Heart right ventricle (tissue), 16 donors: ENCODE measurements at regions of chr17 and their contacts with region 1.

Region 1: DNA sequence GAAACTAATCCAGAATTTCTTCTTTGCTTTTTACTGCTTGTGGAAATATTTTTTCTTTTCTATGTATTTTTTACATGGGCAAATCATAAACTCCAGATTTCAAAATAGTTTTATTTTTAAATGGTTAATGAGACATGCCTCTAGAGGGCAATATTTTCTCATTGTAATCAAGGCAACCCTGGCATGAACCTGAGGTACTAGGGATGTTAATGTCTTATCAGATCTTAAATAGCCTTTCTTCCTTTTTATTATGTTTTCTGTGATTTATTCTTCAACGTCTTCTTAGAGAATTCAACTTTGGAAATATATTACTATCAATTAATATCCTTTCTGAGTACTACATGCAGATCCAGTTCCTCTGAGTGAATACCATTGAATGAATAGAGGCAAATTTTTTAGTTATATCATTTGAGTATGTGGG is 324.7 kb downstream of the BCAS3 start:
- DNase-seq: no peak
- ATAC-seq: peak in 2 of 8 donors; percentile 52 to 59
- H3K4me3 ChIP-seq: no peak overlapping the region
- H3K27ac ChIP-seq: peak overlapping the region in 1 of 10 donors; percentile 18
- H3K4me1 ChIP-seq: peaks cover 0 to 11% (median under 1%) of the 10 kb centered on the region in 9 donors
- H3K27me3 ChIP-seq: no peaks in the 10 kb centered on the region
- CTCF ChIP-seq: peak; percentile 28 to 73 (median 61)

Region 2: DNA sequence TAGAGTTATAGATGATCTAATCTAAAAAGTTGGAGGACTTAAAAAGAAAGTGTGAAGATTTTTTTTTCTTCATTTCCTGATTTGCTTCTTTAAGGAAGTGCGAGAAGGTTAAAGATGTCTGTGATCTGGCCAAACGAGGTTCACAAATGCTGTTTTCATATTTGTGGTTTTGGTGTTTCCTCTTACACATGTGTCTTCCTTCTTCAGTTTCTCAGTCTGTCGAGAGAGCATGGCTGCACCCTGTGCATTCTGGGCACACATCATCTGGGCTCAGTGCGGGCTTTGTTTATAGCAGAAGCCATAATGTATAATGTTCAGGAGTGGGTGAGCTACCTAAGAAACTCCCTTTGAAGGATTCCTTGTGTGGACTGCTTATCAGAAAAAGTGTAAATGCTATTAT is 136.9 kb after region 1 on chr17:
- intact Hi-C with region 1: loop called in 1 of 10 experiments (anchors 10 kb)
- DNase-seq: no peak
- ATAC-seq: peak in 5 of 8 donors; percentile 34 to 66 (median 44)
- H3K4me3 ChIP-seq: no peak overlapping the region
- H3K27ac ChIP-seq: peak overlapping the region in 1 of 10 donors; percentile 49
- H3K4me1 ChIP-seq: peaks cover 0 to 27% (median 7%) of the 10 kb centered on the region in 9 donors
- H3K27me3 ChIP-seq: no peaks in the 10 kb centered on the region
- CTCF ChIP-seq: no peak

Region 3: DNA sequence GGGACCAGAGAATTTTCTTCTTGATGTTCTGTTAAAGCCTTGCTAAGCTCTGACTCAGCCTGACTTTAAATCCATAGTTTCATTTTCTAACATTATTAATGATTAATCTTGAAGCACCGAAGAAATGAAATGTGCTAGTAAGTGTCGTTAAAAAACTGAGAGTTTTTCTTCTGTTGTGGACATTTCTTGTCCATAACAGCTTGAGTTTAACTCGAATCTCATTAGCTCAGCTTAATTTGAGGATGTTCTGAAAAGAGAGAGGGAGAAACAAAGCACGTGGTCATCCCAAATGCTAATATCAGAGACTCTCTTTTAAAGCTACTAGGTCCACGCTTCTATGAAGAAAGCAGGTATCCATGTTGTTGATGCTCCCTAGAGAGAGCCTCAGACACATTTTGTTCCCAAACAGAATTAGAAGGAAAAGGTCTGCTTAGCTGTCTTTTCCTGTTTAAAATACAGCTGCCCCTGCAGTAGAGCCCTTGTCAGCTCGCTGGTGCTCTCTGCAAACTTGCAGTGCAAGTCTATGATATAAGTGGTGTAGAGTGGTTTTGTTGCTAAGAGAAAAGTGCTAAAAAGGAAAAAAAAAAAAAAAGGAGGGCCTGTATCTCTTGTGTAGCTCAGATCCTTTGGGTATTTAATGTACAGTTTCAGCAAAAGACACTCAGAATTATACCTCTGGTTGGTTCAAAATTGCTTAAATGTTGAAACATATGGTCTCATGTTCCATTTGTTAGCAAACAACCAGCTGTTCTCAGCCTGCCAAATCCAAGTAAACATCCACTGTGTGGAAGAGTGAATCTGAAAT is 206.2 kb after region 1 on chr17:
- intact Hi-C with region 1: loop called in 2 of 10 experiments (anchors 5 to 10 kb)
- DNase-seq: no peak
- ATAC-seq: peak in 7 of 8 donors; percentile 45 to 81 (median 59)
- H3K4me3 ChIP-seq: peak overlapping the region in 5 of 10 donors; percentile 5 to 19 (median 10)
- H3K27ac ChIP-seq: peak overlapping the region; percentile 37 to 79 (median 62)
- H3K4me1 ChIP-seq: peaks cover 0 to 31% (median 17%) of the 10 kb centered on the region in 9 donors
- H3K27me3 ChIP-seq: no peaks in the 10 kb centered on the region
- CTCF ChIP-seq: no peak

Region 4: GRCh38 chr17:61389670-61390478 is 387.5 kb after region 1 on chr17:
- intact Hi-C with region 1: loop called (anchors 2 to 5 kb)
- DNase-seq: peak in 1 of 2 donors; percentile 68
- ATAC-seq: peak; percentile 57 to 81 (median 73)
- H3K4me3 ChIP-seq: peak overlapping the region in 2 of 10 donors; percentile 1 to 20
- H3K27ac ChIP-seq: peak overlapping the region in 9 of 10 donors; percentile 19 to 72 (median 60)
- H3K4me1 ChIP-seq: peaks cover 0 to 24% (median 8%) of the 10 kb centered on the region in 9 donors
- H3K27me3 ChIP-seq: peaks cover 0 to 12% (median 0%) of the 10 kb centered on the region in 7 donors
- CTCF ChIP-seq: peak; percentile 66 to 92 (median 90)

Region 5: DNA sequence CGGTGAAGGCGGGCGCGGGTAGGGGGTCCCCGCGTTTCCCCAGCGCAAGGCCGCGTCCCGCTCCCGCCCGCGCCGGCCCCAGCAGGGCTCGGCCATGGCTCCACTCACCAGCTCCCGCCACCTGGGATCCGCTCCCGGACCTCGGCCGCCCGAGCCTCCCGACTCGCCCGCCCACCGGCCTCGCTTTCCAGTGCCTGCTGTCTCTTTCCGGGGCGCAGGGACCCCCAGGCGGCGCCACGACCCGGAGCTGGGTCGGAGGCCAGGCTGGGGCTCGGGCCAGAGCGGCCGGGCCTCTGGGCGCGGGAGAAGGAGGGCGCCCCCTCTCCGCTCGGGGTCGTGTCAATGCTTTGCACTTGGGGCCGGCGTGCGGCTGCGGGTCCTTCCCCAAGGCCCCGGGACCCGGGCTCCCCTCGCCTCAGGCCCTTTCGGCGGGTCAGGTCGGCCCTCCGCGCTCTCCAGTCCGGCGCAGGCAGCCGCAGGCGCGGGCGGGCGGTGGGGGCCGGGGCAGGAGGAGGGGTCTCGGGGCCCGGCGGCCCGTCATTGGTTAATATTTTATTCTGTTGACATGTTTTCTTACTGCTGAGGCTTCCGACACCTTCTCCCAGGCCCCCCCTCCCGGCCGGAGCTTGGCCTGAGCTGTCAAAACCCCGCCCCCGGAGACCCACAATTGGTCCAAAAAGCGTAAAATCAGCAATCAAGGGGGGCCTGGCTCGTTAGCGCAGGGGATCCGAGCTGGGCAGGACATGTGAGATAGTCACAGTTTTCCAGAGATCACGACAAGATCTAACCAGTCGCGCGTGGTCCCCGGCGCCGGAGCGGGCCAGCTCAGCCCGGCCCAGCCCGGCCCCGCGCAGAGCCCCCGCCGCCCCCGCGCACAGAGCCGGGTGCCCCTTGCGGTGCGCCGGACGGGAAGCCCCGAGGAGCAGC is 397.1 kb after region 1 on chr17 and contains the start of gene TBX2:
- intact Hi-C with region 1: loop called in 7 of 10 experiments (anchors 5 kb)
- DNase-seq: peak; percentile 84 to 89
- ATAC-seq: peak; percentile 59 to 75 (median 64)
- H3K4me3 ChIP-seq: peak within 1 kb of the TSS; percentile 46 to 81 (median 66)
- H3K27ac ChIP-seq: peak within 1 kb of the TSS; percentile 69 to 88 (median 85)
- H3K4me1 ChIP-seq: peaks cover 15 to 77% (median 54%) of the 10 kb centered on the region in 9 donors
- H3K27me3 ChIP-seq: peaks cover 44 to 96% (median 86%) of the 10 kb centered on the region in 7 donors
- CTCF ChIP-seq: peak in 3 of 9 donors; percentile 10 to 19 (median 13)
- total RNA-seq, gene TBX2: 4.6 to 21.8 (median 10.0) TPM

Region 6: GRCh38 chr17:61543786-61544415 is 541.6 kb after region 1 on chr17:
- intact Hi-C with region 1: loop called in 1 of 10 experiments (anchors 10 kb)
- DNase-seq: no peak
- ATAC-seq: no peak
- H3K4me3 ChIP-seq: no peak overlapping the region
- H3K27ac ChIP-seq: no peak overlapping the region
- H3K4me1 ChIP-seq: no peaks in the 10 kb centered on the region
- H3K27me3 ChIP-seq: peaks cover 0 to 27% (median 2%) of the 10 kb centered on the region in 7 donors
- CTCF ChIP-seq: no peak